Activated CD4-positive, alpha-beta T cell treated with anti-CD3 and anti-CD28 coated beads for 36 hours (primary cell): ENCODE measurements at regions of chr2 and their contacts with region 1.

Region 1: DNA sequence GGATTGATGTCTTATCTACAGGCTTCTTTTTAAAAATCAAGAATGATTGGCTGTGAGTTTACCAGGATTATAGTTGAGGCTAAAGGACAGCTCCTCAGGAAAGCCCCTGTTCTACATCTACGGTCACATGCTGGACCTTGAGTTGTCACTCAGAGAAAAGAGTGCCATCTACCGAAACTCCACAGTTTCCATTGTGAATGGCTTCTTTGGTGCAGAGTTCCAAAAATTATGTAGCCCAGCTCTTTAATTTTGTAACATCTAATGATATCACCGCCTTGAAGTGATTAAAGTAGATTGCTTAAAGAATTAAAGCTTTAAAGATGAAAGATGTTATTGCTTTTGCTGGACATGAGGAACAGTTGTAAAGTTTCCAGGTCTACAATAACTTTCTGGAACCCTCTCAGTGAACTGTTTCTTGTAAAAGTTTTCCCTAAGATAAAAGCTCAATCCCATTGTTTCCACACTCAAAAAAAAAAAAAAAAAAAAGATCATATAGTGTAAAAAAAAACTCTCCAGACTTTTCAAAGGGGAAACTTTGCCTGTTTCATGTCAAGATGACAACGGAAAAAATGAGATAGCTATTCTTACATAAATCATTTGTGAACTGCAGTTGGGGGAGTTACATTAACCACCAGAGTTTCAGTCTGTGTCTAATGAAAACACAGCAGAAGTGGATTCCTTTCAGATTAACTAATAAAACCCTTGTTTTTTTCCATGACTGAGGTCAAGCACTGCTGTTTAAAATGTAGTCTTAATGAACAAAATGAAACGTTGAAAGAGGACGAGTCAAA is 4.3 kb downstream of the COL3A1 start:
- DNase-seq: no peak
- ATAC-seq: peak; percentile 82
- H3K4me3 Mint-ChIP-seq: peak overlapping the region; percentile 49
- H3K27ac Mint-ChIP-seq: peak overlapping the region; percentile 68
- H3K4me1 Mint-ChIP-seq: peaks cover 16% of the 10 kb centered on the region
- H3K27me3 Mint-ChIP-seq: peaks cover 12% of the 10 kb centered on the region

Region 2: GRCh38 chr2:188870289-188870688 is 108.2 kb before region 1 on chr2:
- CTCF ChIA-PET with region 1: no interaction called
- POLR2A ChIA-PET with region 1: no interaction called
- intact Hi-C with region 1: loop called in 1 of 2 experiments (anchors 1 kb)
- DNase-seq: peak; percentile 16
- ATAC-seq: peak; percentile 93
- H3K4me3 Mint-ChIP-seq: no peak overlapping the region
- H3K27ac Mint-ChIP-seq: no peak overlapping the region
- H3K4me1 Mint-ChIP-seq: no peaks in the 10 kb centered on the region
- H3K27me3 Mint-ChIP-seq: peaks cover 1% of the 10 kb centered on the region